PC-9 (cell line): ENCODE measurements at regions of chr1 and their contacts with region 1.

Region 1: DNA sequence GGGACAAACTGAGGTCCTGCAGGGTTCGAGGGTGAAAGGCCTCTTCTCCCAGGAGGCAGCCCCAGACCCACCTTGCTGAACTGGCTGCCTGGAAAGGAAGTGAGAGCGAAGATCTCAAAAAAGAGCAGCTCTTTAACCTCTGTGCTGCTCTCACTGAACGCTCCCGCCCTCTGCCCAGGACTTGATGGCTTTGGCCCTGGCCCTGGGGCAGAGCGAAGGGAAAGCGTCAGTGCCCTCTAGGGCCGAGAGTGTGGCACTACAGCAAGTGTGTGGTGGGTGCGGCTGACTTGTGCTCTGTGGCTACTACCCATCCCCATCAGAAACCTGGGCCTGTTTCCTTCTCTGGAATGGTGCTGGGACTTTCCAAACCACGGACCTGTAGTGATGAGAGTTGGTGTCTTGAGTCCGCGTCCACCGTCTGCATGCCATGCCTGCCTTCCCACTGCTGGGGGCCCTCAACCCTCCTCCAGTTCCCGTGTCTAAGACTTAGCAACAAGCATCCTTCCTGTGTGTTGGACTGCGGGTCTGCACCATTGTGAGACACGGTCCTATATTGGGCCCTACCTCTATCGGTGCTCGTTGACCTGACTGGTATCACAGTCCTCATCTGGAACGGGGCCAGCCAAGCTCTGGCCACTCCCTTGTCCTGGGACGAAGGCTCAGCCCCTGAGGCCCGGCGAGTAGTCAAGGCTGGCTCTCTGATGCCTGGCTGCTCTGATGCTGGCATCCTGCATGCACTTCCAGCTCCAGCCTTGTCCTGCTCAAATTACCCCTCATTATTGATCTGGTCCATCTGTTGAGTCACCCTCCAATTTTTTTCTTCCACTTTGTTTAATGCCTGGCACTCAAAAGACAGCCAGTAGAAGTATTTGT is 180.3 kb downstream of the DISC1 start:
- DNase-seq: peak in 1 of 2 experiments; percentile 28
- H3K4me3 ChIP-seq: no peak overlapping the region
- H3K27ac ChIP-seq: no peak overlapping the region
- H3K4me1 ChIP-seq: no peaks in the 10 kb centered on the region
- H3K27me3 ChIP-seq: no peaks in the 10 kb centered on the region
- CTCF ChIP-seq: peak; percentile 62

Region 2: GRCh38 chr1:231240883-231241735 is 565.8 kb before region 1 on chr1 and contains the start of gene GNPAT:
- CTCF ChIA-PET with region 1: no interaction called
- POLR2A ChIA-PET with region 1: no interaction called
- intact Hi-C with region 1: no loop called
- DNase-seq: peak; percentile 75 to 89
- H3K4me3 ChIP-seq: peak within 1 kb of the TSS; percentile 98
- H3K27ac ChIP-seq: peak within 1 kb of the TSS; percentile 46; the same call in 1 of the 2 replicates
- H3K4me1 ChIP-seq: peaks cover 19% of the 10 kb centered on the region
- H3K27me3 ChIP-seq: no peaks in the 10 kb centered on the region
- CTCF ChIP-seq: no peak
- total RNA-seq, gene GNPAT: 21.8 and 22.3 TPM in 2 replicates

Region 3: GRCh38 chr1:231757101-231757404 is 49.8 kb before region 1 on chr1:
- CTCF ChIA-PET with region 1: interaction called, 3 read pairs
- POLR2A ChIA-PET with region 1: no interaction called
- intact Hi-C with region 1: loop called (anchors 1 kb)
- DNase-seq: no peak
- H3K4me3 ChIP-seq: no peak overlapping the region
- H3K27ac ChIP-seq: no peak overlapping the region
- H3K4me1 ChIP-seq: no peaks in the 10 kb centered on the region
- H3K27me3 ChIP-seq: no peaks in the 10 kb centered on the region
- CTCF ChIP-seq: peak; percentile 42; the same call in 1 of the 2 replicates